Dorsolateral prefrontal cortex (tissue), 120 donors: ENCODE measurements at regions of chr11 and their contacts with region 1.

Region 1: GRCh38 chr11:121929581-121929980 is 186.4 kb downstream of the BLID start:
- DNase-seq: peak in 7 of 10 donors; percentile 31 to 65 (median 46)
- H3K4me3 ChIP-seq: peak overlapping the region; percentile 20 to 74 (median 55)
- H3K27ac ChIP-seq: peak overlapping the region; percentile 1 to 92 (median 79)
- H3K27me3 ChIP-seq: no peaks in the 10 kb centered on the region
- CTCF ChIP-seq: no peak

Region 2: DNA sequence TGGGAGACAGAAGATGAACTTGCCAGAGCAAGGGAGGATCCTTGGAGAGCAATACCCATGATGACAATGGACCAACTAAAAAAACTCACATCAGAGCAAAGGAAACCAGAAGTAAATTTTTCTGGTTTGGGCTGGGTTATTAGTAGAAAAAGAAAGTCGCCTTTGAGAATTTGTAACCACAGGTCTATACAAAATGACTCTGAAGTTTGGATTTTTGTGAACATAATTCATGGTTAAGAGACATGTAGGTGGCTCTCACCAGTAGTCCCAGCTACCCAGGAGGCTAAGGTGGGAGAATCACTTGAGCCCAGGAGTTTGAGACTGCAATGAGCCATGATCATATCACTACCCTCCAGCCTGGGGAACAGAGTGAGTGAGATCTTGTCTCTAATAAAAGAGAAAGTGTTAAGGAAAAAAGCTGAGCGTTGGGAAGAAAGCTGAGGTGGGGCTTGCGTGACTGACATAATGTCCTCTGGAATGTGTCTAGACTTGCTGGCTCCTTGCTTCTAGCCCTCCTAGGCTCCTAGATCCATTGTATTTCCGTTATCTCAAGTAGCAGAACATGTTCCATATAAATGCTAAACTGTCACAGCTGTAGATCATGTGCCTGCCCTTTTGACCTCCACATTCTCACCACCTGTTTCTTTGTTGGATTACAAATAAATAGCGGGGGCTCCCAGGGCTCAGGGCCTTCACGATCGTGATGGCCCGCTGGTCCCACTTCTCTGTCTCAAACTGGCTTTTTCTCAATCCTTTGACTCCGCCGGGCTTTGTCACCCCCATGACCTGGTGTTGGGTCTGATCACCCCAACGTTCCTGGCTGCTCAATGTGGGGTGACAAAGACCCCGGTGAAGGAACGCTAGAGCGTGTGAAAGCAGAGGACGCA is 693.2 kb before region 1 on chr11:
- intact Hi-C with region 1: no loop called
- DNase-seq: no peak
- H3K4me3 ChIP-seq: no peak overlapping the region
- H3K27ac ChIP-seq: no peak overlapping the region
- H3K27me3 ChIP-seq: peaks cover 0 to 21% (median 0%) of the 10 kb centered on the region in 45 donors
- CTCF ChIP-seq: no peak

Region 3: DNA sequence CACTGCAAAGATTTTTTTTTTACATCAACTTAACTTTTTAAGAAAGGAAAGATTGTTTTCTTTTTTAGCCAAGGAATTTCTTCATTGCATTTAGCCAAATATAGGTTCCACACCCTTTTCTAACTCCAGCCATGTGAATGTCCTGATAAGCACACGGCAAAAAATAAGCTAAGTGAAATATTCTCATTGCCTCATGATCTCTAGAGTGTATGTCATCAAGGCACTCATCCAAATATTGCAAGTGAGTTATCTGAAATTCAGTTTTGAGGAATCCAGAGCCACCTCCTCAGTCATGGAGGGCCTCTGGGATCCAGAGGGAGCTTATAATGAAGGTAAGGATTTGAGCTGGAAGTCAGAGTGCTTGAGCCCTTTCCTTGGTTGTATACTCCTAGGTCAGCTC is 106.4 kb after region 1 on chr11:
- intact Hi-C with region 1: no loop called
- DNase-seq: no peak
- H3K4me3 ChIP-seq: peak overlapping the region in 1 of 59 donors; percentile 3
- H3K27ac ChIP-seq: peak overlapping the region in 1 of 59 donors; percentile 24
- H3K27me3 ChIP-seq: no peaks in the 10 kb centered on the region
- CTCF ChIP-seq: no peak

Region 4: GRCh38 chr11:122101625-122102291 is 172.2 kb after region 1 on chr11:
- intact Hi-C with region 1: loop called in 1 of 2 experiments (anchors 10 kb)
- DNase-seq: peak; percentile 45 to 90 (median 81)
- H3K4me3 ChIP-seq: peak overlapping the region; percentile 58 to 91 (median 76)
- H3K27ac ChIP-seq: peak overlapping the region; percentile 91 to 99 (median 98)
- H3K27me3 ChIP-seq: no peaks in the 10 kb centered on the region
- CTCF ChIP-seq: peak; percentile 70 to 95 (median 85)